ENCODE measurements at regions of chr11 and their contacts with region 1.

Region 1: DNA sequence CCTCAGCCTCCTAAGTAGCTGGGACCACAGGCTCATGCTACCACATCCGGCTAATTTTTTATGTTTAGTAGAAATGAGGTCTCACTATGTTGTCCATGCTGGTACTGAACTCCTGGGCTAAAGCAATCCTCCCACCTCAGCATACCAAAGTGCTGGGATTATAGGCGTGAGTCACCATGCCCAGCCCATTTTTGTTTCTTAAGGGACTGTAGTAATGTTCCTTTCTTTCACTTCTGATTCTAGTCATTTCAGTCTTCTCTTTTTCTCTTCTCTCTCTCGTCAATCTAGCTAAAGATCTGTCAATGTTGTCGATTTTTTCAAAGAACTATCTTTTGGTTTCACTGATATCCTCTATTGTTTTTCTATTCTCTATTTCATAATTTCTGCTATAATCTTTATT is 111.0 kb upstream of the APOA1 start:
- DNase-seq: peak; percentile 10
- H3K4me3 Mint-ChIP-seq: no peak overlapping the region
- H3K27ac Mint-ChIP-seq: peak overlapping the region; percentile 0
- H3K4me1 Mint-ChIP-seq: peaks cover 30% of the 10 kb centered on the region
- H3K27me3 Mint-ChIP-seq: no peaks in the 10 kb centered on the region

Region 2: GRCh38 chr11:116890193-116890592 is 58.2 kb before region 1 on chr11:
- intact Hi-C with region 1: loop called (anchors 5 kb)
- DNase-seq: no peak
- H3K4me3 Mint-ChIP-seq: no peak overlapping the region
- H3K27ac Mint-ChIP-seq: peak overlapping the region; percentile 64
- H3K4me1 Mint-ChIP-seq: peaks cover 26% of the 10 kb centered on the region
- H3K27me3 Mint-ChIP-seq: no peaks in the 10 kb centered on the region

Region 3: DNA sequence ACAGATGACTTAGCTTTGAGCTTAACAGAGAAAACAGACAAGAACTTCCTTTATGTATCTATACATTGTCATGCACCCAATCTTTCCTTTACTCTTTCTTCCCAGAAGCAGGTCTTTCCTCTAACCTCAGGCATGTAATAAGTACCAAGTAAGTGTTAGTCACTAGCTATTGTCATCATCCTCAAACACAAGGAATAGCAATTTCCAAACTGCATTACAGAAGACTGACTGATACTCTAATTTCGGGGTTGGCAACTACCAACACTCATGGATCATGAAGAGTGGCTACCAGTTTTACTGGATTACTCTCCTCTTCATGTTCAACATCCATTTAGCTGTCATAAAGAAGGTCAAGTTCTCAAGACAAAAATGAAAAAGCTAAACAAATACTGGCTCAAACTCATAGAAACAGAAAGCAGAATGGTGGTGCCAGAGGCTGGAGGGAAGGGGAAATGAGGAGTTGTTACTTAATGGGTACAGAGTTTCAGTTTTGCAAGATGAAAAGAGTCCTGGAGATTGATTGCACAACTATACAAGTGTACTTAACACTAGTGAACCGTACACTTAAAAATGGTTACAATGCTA is 38.2 kb after region 1 on chr11:
- intact Hi-C with region 1: loop called (anchors 1 kb)
- DNase-seq: no peak
- H3K4me3 Mint-ChIP-seq: peak overlapping the region; percentile 65
- H3K27ac Mint-ChIP-seq: peak overlapping the region; percentile 73
- H3K4me1 Mint-ChIP-seq: peaks cover 70% of the 10 kb centered on the region
- H3K27me3 Mint-ChIP-seq: no peaks in the 10 kb centered on the region

Region 4: GRCh38 chr11:117010808-117011540 is 62.6 kb after region 1 on chr11:
- intact Hi-C with region 1: loop called (anchors 2 kb)
- DNase-seq: no peak
- H3K4me3 Mint-ChIP-seq: no peak overlapping the region
- H3K27ac Mint-ChIP-seq: peak overlapping the region; percentile 78
- H3K4me1 Mint-ChIP-seq: peaks cover 38% of the 10 kb centered on the region
- H3K27me3 Mint-ChIP-seq: no peaks in the 10 kb centered on the region

Region 5: DNA sequence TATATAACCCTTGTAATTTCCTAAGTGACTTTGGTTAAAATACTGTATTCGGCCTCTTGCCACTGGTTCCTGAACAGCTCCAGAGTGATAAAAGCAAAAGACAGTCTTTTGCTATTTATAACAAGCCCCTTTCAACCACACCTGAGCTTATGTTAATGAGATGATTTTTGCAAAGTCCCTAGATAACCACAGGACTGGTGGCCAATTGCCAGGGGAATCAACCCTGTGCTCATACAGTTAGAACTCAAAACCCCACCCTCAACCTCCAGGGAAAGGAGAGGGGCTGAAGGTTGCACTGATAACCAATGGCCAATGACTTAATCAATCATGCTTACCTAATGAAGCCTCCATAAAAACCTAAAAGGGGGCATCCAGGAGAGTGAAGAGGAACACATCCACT is 71.9 kb after region 1 on chr11:
- intact Hi-C with region 1: loop called (anchors 1 kb)
- DNase-seq: no peak
- H3K4me3 Mint-ChIP-seq: no peak overlapping the region
- H3K27ac Mint-ChIP-seq: peak overlapping the region; percentile 40
- H3K4me1 Mint-ChIP-seq: peaks cover 58% of the 10 kb centered on the region
- H3K27me3 Mint-ChIP-seq: no peaks in the 10 kb centered on the region

Region 6: GRCh38 chr11:117098269-117099232 is 150.2 kb after region 1 on chr11 and contains the start of gene SIK3:
- intact Hi-C with region 1: loop called (anchors 1 kb)
- DNase-seq: peak; percentile 90
- H3K4me3 Mint-ChIP-seq: peak within 1 kb of the TSS; percentile 100
- H3K27ac Mint-ChIP-seq: peak within 1 kb of the TSS; percentile 99
- H3K4me1 Mint-ChIP-seq: peaks cover 50% of the 10 kb centered on the region
- H3K27me3 Mint-ChIP-seq: peaks cover 3% of the 10 kb centered on the region
- total RNA-seq, gene SIK3: 49.9 and 54.2 TPM in 2 replicates